Sigmoid colon (tissue), 7 donors: ENCODE measurements at regions of chr9 and their contacts with region 1.

Region 1: DNA sequence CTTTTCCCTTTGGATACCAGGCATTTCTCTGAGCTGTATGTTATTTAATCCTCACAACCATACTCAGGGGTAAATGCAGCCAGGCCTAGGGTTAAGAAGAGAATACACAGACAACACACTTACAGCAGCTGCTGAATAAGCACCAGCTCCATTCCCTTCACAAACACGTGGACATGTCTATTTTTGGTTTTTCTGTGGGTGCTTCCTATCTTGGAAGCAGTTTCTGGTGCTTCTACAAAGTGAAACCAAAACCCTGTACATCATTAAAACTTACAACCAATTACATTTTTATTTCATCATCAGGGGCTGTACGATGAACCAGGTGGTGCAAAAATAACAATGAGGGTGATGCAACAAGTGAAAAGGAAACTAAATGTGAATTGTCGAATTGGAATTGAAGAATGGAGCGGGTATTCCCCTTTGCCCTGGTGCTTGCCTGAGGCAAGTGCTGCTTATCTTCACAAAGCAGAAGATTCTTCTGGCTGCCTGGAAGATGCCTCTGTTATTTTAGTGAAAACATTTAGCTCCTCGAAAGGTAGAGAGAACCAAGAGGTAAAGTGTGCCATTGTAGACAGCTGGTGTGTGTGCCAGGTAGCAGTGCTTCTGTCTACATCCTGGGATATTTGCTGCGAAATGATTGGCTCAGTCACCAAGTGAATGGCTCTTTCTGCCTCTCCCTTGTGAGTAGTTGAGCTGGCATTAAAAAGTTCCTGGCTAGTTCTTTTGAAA is 18.6 kb upstream of the IFNB1 start:
- DNase-seq: no peak
- H3K4me3 ChIP-seq: peak overlapping the region; percentile 11 to 42 (median 32)
- H3K27ac ChIP-seq: peak overlapping the region; percentile 70 to 84 (median 78)
- H3K4me1 ChIP-seq: peaks cover 0 to 20% (median 12%) of the 10 kb centered on the region in 4 donors
- H3K27me3 ChIP-seq: no peaks in the 10 kb centered on the region
- CTCF ChIP-seq: no peak
- EP300 ChIP-seq: no peak
- POLR2A ChIP-seq: no peak

Region 2: GRCh38 chr9:20980832-20981455 is 115.4 kb before region 1 on chr9:
- intact Hi-C with region 1: loop called (anchors 10 kb)
- DNase-seq: no peak
- H3K4me3 ChIP-seq: peak overlapping the region in 1 of 4 donors; percentile 10
- H3K27ac ChIP-seq: peak overlapping the region; percentile 63 to 80 (median 74)
- H3K4me1 ChIP-seq: peaks cover 0 to 50% (median 34%) of the 10 kb centered on the region in 4 donors
- H3K27me3 ChIP-seq: no peaks in the 10 kb centered on the region
- CTCF ChIP-seq: no peak
- EP300 ChIP-seq: no peak
- POLR2A ChIP-seq: no peak